Esophagus squamous epithelium (tissue), 5 donors: ENCODE measurements at regions of chr5 and their contacts with region 1.

Region 1: DNA sequence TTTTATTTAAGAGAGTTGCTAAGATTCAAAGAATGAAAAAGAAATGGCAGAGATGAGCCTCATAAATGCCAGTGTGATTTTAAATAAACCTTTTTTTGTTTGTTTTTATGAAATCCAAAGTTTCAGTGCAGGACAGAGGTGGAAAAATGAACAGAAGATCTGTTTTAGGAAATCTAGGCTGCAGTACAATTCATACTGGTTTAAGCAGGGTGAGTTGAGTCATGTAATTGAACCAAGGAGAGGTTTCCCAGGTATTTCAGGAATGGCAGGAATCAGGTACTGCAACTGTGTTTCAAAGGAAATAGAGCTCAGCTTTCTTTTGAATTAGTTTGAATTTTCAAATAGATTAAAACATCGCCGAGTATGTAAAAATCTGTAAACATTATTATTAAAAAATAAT is 3.0 kb upstream of the ANKRD31 start:
- DNase-seq: no peak
- H3K4me3 ChIP-seq: no peak overlapping the region
- H3K27ac ChIP-seq: peak overlapping the region in 1 of 4 donors; percentile 54
- H3K4me1 ChIP-seq: peaks cover 6 to 71% (median 8%) of the 10 kb centered on the region in 3 donors
- H3K27me3 ChIP-seq: no peaks in the 10 kb centered on the region
- CTCF ChIP-seq: peak in 2 of 6 experiments; percentile 7 to 39
- POLR2A ChIP-seq: no peak

Region 2: GRCh38 chr5:74963407-74963806 is 276.3 kb before region 1 on chr5:
- intact Hi-C with region 1: no loop called
- DNase-seq: no peak
- H3K4me3 ChIP-seq: no peak overlapping the region
- H3K27ac ChIP-seq: no peak overlapping the region
- H3K4me1 ChIP-seq: no peaks in the 10 kb centered on the region
- H3K27me3 ChIP-seq: no peaks in the 10 kb centered on the region
- CTCF ChIP-seq: no peak
- POLR2A ChIP-seq: no peak

Region 3: GRCh38 chr5:75023368-75024159 is 216.1 kb before region 1 on chr5:
- intact Hi-C with region 1: no loop called
- DNase-seq: no peak
- H3K4me3 ChIP-seq: no peak overlapping the region
- H3K27ac ChIP-seq: no peak overlapping the region
- H3K4me1 ChIP-seq: no peaks in the 10 kb centered on the region
- H3K27me3 ChIP-seq: no peaks in the 10 kb centered on the region
- CTCF ChIP-seq: no peak
- POLR2A ChIP-seq: no peak

Region 4: GRCh38 chr5:75320341-75320740 is 80.7 kb after region 1 on chr5:
- intact Hi-C with region 1: loop called (anchors 10 kb)
- DNase-seq: no peak
- H3K4me3 ChIP-seq: no peak overlapping the region
- H3K27ac ChIP-seq: peak overlapping the region; percentile 41 to 87 (median 72)
- H3K4me1 ChIP-seq: peaks cover 9 to 23% (median 10%) of the 10 kb centered on the region in 3 donors
- H3K27me3 ChIP-seq: no peaks in the 10 kb centered on the region
- CTCF ChIP-seq: no peak
- POLR2A ChIP-seq: no peak